ENCODE measurements at regions of chr17 and their contacts with region 1.

Region 1: DNA sequence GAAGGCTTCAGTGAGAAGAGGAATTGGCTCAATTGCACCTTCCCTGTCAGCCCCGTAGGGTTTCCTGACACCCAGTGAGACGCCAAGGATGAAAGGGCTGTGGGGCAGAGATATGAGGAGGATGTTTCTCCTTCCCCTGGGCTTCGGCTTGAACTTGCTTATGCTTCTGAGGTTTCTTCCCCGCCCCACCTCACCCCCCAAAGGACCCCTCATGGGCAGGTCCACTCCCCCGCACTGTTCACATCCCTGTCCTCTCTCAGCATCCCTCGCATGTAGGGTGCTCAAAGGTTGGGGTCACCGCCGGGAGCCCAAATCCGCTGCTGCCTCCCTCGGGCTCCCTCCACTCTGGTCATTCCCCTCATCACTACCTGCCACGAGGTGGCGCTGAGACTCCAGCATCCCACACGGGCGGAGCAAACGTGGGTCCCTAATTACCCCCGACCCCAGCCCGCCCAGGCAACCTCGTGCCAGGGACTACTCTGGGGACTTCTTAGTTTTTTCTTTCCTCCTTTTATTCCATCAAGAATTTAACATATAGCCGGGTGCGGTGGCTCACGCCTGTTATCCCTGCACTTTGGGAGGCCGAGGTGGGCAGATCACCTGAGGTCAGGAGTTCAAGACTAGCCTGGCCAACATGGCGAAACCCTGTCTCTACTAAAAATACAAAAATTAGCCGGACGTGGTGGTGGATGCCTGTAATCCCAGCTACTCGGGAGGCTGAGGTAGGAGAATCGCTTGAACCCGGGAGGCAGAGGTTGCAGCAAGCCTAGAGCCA is 3.3 kb upstream of the TRARG1 start:
- DNase-seq: peak in 3 of 4 donors; percentile 52 to 86 (median 64)
- ATAC-seq: peak; percentile 85
- H3K4me3 ChIP-seq: no peak overlapping the region
- H3K27ac ChIP-seq: no peak overlapping the region
- H3K4me1 ChIP-seq: no peaks in the 10 kb centered on the region
- H3K27me3 ChIP-seq: peaks cover 10 to 76% of the 10 kb centered on the region in 2 donors
- CTCF ChIP-seq: peak; percentile 74 to 77

Region 2: GRCh38 chr17:1312261-1312870 is 36.2 kb after region 1 on chr17:
- intact Hi-C with region 1: no loop called
- DNase-seq: peak in 1 of 4 donors; percentile 33
- ATAC-seq: no peak
- H3K4me3 ChIP-seq: no peak overlapping the region
- H3K27ac ChIP-seq: no peak overlapping the region
- H3K4me1 ChIP-seq: no peaks in the 10 kb centered on the region
- H3K27me3 ChIP-seq: peaks cover 0 to 56% of the 10 kb centered on the region in 2 donors
- CTCF ChIP-seq: no peak

Region 3: GRCh38 chr17:1331708-1332107 is 55.6 kb after region 1 on chr17:
- intact Hi-C with region 1: loop called in 1 of 2 experiments (anchors 5 kb)
- DNase-seq: no peak
- ATAC-seq: no peak
- H3K4me3 ChIP-seq: no peak overlapping the region
- H3K27ac ChIP-seq: no peak overlapping the region
- H3K4me1 ChIP-seq: no peaks in the 10 kb centered on the region
- H3K27me3 ChIP-seq: peaks cover 0 to 6% of the 10 kb centered on the region in 2 donors
- CTCF ChIP-seq: no peak